Tibial artery (tissue), 4 donors: ENCODE measurements at regions of chr3 and their contacts with region 1.

Region 1: DNA sequence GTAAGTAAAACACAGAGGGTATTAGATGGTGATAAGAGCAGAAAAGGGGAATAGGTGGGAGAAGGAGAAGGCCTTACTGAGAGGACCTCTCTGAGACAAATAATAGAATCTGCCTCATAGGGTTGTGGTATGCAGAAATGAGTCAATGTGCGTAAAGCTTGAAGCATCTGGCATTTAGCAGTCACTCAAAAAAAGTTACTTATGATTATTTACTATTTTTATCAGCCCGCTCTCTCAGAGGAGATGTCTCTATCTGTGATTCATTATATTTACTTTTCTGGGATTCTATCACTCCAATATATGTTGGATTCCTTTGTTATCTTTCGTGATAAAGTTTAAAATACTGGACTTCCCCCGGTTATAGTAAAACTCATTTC is 4.6 kb upstream of the TM4SF1 start:
- DNase-seq: no peak
- H3K4me3 ChIP-seq: no peak overlapping the region
- H3K27ac ChIP-seq: peak overlapping the region; percentile 55 to 69
- H3K4me1 ChIP-seq: peaks cover 0 to 56% (median 20%) of the 10 kb centered on the region in 4 donors
- H3K27me3 ChIP-seq: no peaks in the 10 kb centered on the region
- CTCF ChIP-seq: no peak

Region 2: DNA sequence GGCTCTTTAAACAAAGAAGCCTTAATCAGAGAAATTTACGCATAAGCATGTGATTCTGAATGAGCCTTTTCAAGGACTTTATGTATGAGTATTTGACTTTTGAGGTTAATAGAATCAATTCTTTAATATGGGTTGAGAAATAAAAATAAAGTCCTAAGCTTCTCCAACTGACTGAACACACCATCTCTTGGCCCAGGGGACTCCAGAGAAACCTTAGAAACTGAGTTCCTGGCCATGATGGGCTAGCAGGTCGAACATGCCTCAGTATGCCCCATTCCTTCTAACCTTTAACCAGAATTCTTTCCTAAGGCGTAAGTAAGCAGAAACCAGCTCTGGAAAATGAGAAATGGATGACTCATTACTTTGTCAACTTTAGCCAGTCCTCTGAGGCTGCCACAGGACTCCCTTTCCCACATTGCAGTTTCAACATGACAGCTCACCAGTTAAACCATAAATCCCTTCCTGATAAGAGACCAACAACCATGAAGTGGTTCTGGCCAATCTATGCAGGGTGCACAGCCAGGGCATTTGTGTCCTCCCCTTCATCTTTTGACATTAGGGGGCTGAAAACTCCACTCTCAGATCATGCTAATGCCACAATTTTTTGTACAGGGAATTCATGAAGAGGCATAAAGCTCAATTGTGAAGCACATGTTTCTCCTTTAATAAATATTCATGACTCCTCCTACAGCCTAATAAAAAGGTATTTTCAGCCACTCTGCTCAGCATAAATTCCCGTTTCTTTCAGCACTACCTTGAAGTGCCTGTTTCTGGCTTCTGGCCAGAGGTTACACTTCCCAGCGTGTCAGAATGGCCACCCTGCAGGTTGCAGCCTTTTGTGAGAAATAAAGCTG is 81.9 kb before region 1 on chr3:
- intact Hi-C with region 1: loop called (anchors 5 kb)
- DNase-seq: peak; percentile 33 to 71
- H3K4me3 ChIP-seq: no peak overlapping the region
- H3K27ac ChIP-seq: peak overlapping the region; percentile 53 to 60
- H3K4me1 ChIP-seq: peaks cover 0 to 39% (median 22%) of the 10 kb centered on the region in 4 donors
- H3K27me3 ChIP-seq: no peaks in the 10 kb centered on the region
- CTCF ChIP-seq: no peak

Region 3: GRCh38 chr3:149480325-149481017 is 98.4 kb after region 1 on chr3:
- intact Hi-C with region 1: no loop called
- DNase-seq: peak; percentile 82 to 91
- H3K4me3 ChIP-seq: no peak overlapping the region
- H3K27ac ChIP-seq: peak overlapping the region; percentile 73 to 76
- H3K4me1 ChIP-seq: peaks cover 0 to 31% (median 23%) of the 10 kb centered on the region in 4 donors
- H3K27me3 ChIP-seq: no peaks in the 10 kb centered on the region
- CTCF ChIP-seq: peak; percentile 83 to 86